ENCODE measurements at regions of chr6 and their contacts with region 1.

Region 1: DNA sequence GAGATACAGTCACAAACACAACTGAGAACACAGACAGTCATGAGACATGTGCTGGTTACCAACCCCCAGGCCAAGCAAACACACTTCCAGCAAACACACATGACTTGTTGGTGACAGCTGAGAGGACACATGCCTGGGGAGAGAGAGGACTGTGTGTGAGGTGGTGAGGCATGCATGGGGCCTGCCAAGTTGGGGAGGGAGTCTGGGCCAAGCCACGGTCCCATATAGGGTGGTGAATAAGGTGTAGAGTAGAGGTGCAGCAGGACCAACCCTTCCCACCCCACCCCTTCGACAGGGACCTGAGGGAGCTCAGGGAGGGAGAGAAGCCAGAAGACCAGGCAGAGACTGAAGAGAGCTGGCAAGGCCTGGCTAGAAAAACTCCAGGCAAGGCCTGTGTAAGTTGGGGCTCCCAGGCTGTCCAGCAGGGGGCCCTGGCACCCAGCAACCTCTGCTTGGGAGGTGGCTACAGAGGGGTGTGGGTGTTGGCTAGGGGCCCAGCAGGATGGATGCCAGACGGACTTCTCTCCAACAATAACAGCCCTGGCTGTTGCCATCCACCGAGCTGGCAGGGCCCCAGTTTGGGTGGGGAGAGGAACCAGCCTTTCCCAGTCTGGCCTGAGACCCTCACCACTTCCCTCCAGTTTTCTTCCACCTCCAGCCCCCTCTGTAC is 2.0 kb upstream of the SLC29A1 start:
- DNase-seq: peak; percentile 60 to 88 (median 72)
- ATAC-seq: peak; percentile 67
- H3K4me3 ChIP-seq: no peak overlapping the region
- H3K4me3 Mint-ChIP-seq: peak overlapping the region; percentile 77
- H3K27ac ChIP-seq: no peak overlapping the region
- H3K27ac Mint-ChIP-seq: peak overlapping the region; percentile 39
- H3K4me1 ChIP-seq: peaks cover 38% of the 10 kb centered on the region
- H3K4me1 Mint-ChIP-seq: peaks cover 36% of the 10 kb centered on the region
- H3K27me3 ChIP-seq: peaks cover 4 to 7% of the 10 kb centered on the region in 2 experiments
- H3K27me3 Mint-ChIP-seq: no peaks in the 10 kb centered on the region
- CTCF ChIP-seq: peak; percentile 66

Region 2: GRCh38 chr6:44237813-44238433 is 16.5 kb after region 1 on chr6:
- CTCF ChIA-PET with region 1: interaction called, 7 read pairs
- POLR2A ChIA-PET with region 1: interaction called, 8 read pairs
- intact Hi-C with region 1: loop called (anchors 1 to 2 kb)
- DNase-seq: peak; percentile 61 to 90 (median 74)
- ATAC-seq: peak; percentile 89
- H3K4me3 ChIP-seq: peak overlapping the region; percentile 64
- H3K4me3 Mint-ChIP-seq: peak overlapping the region; percentile 90
- H3K27ac ChIP-seq: peak overlapping the region; percentile 74 to 80
- H3K27ac Mint-ChIP-seq: peak overlapping the region; percentile 86
- H3K4me1 ChIP-seq: peaks cover 18% of the 10 kb centered on the region
- H3K4me1 Mint-ChIP-seq: peaks cover 8% of the 10 kb centered on the region
- H3K27me3 ChIP-seq: no peaks in the 10 kb centered on the region
- H3K27me3 Mint-ChIP-seq: no peaks in the 10 kb centered on the region
- CTCF ChIP-seq: peak; percentile 99

Region 3: GRCh38 chr6:44257025-44257752 is 35.8 kb after region 1 on chr6 and contains the start of gene SLC35B2:
- CTCF ChIA-PET with region 1: interaction called, 12 read pairs
- POLR2A ChIA-PET with region 1: interaction called, 12 read pairs
- intact Hi-C with region 1: loop called (anchors 5 kb)
- DNase-seq: peak in 13 of 14 experiments; percentile 33 to 89 (median 56)
- ATAC-seq: peak; percentile 84
- H3K4me3 ChIP-seq: peak within 1 kb of the TSS; percentile 95
- H3K4me3 Mint-ChIP-seq: peak within 1 kb of the TSS; percentile 90
- H3K27ac ChIP-seq: peak within 1 kb of the TSS; percentile 63 to 76
- H3K27ac Mint-ChIP-seq: peak within 1 kb of the TSS; percentile 78
- H3K4me1 ChIP-seq: peaks cover 52% of the 10 kb centered on the region
- H3K4me1 Mint-ChIP-seq: peaks cover 57% of the 10 kb centered on the region
- H3K27me3 ChIP-seq: no peaks in the 10 kb centered on the region
- H3K27me3 Mint-ChIP-seq: no peaks in the 10 kb centered on the region
- CTCF ChIP-seq: peak; percentile 29
- total RNA-seq, gene SLC35B2: 6.4 to 7.0 TPM